ENCODE measurements at regions of chr1 and their contacts with region 1.

Region 1: GRCh38 chr1:169601093-169601881 is 15.0 kb upstream of the F5 start:
- DNase-seq: no peak
- ATAC-seq: no peak

Region 2: DNA sequence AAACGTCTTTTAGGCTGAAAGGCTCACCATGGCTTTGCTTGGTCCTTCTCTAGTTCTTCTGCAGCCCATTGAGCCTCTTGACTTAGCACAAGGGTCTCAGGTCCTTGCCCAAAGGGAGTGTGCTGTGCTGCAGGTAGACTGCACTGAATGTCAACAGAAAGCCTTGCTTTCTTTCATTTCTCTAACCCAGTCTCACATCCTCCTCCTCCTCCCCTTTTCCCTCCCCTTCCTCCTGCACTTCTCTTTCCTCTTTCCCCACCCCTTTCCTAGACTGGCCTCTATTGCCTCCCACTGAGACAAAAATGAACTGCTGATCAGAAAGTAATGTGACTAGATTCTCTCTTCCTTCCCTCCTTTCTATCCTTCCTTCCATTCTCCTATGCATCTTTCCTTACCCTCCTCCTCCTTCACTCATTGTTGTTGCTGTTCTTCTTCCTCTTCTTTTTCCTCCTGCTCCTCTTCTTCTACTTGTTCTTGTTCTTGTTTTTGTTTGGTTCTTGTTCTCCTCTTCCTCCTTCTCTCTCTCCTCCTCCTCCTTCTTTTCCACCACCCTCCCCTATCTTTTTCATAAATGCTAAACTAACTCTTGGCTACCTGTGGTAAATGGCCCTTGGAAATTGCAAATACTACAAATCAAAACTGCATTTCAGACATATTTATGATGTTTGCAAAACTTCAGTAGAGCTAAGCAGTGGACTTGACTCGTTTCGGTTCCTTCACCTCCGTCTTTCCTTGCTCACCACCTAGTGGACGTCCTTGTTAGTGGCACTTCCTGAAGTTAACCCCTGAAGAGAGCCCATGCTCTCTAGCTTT is 110.4 kb after region 1 on chr1 and contains the start of gene SELL:
- intact Hi-C with region 1: loop called (anchors 1 kb)
- DNase-seq: no peak
- ATAC-seq: peak; percentile 92
- total RNA-seq, gene SELL: 1.1 TPM

Region 3: DNA sequence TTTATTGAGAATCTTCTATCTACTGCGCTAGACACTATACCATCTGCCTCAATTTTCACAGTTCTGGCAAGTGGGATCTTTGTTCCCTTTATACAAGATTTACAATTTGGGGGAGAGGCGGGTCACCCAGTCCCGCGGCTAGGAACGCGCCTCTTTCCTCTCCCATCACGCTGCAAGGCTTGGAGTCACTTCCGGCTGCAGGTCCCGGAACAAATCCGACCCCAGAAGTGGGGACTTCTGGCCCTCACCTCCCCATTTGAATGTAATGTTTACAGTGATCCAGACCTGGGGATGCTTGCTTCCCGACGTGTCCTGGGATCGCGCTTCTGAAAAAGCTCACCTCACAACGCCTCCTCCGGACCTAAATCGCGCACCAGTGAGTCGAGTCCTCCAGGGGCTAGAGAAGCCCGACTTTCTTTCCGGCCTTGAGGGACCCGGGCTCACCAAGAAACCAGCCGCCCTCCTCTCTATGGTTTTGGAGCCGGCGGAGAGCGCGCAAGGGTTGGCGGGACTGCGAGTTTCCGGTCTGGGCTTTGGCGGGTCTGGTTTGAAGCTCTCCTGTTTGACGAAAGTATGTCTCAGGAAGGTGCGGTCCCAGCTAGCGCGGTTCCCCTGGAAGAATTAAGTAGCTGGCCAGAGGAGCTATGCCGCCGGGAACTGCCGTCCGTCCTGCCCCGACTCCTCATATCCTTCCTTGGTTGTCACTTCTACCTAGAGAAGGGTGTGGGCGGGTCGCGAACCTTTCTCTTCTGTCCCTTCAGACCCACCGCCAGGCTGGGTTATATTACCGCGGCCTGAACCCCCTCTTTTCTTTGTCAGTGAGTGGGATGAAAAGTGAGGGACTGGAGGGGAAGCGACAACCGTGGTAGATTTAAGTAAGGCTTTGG is 193.5 kb after region 1 on chr1 and contains the start of gene METTL18:
- intact Hi-C with region 1: loop called (anchors 2 kb)
- DNase-seq: peak; percentile 93
- ATAC-seq: peak; percentile 100
- total RNA-seq, gene METTL18: 6.5 TPM

Region 4: GRCh38 chr1:169809370-169810095 is 208.2 kb after region 1 on chr1:
- intact Hi-C with region 1: loop called (anchors 5 kb)
- DNase-seq: no peak
- ATAC-seq: no peak

Measured in Right ventricle myocardium inferior (tissue), 1 donor.